Activated CD8-positive, alpha-beta memory T cell treated with anti-CD3 and anti-CD28 coated beads, Interleukin-2, amount 10 ng/mL, durations not matched to agents 7 days and 5 days (primary cell): ENCODE measurements at regions of chr7 and their contacts with region 1.

Region 1: GRCh38 chr7:37916673-37917660 is at the start of gene SFRP4:
- DNase-seq: no peak
- ATAC-seq: peak; percentile 31
- H3K4me3 Mint-ChIP-seq: peak within 1 kb of the TSS; percentile 37
- H3K27ac Mint-ChIP-seq: no peak within 1 kb of the TSS
- H3K4me1 Mint-ChIP-seq: peaks cover 21% of the 10 kb centered on the region
- H3K27me3 Mint-ChIP-seq: peaks cover 81% of the 10 kb centered on the region
- total RNA-seq, gene SFRP4: not detected

Region 2: DNA sequence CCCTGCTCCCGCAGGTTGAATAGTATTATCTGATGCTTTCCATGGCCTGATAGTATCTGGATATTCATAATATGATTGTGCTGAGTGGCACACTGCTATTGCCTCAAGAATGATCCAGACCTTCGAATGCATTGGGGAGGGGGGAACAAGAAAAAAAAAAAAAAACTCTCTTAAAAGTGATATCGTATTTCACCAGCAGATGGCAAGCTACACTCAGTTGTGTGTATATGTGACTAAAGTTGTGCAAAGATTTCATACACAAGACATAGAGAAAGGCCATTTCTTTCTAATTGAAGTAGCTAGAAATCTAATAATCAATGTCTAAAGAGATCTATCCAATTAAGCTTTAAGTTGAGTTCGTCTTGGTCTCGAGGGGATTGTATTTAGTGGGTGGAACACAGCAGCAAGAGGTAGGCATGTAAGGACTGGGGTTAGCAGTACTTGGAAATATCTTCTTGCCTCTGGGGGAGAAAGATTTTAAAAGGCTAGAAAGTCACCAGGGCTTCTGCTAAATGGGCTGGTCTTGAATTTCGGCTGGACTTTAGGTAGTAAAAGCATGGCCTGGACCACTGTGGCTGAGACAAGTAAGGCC is 15.6 kb before region 1 on chr7:
- CTCF ChIA-PET with region 1: interaction called, 10 read pairs
- DNase-seq: no peak
- ATAC-seq: no peak
- H3K4me3 Mint-ChIP-seq: no peak overlapping the region
- H3K27ac Mint-ChIP-seq: no peak overlapping the region
- H3K4me1 Mint-ChIP-seq: no peaks in the 10 kb centered on the region
- H3K27me3 Mint-ChIP-seq: peaks cover 9% of the 10 kb centered on the region

Region 3: DNA sequence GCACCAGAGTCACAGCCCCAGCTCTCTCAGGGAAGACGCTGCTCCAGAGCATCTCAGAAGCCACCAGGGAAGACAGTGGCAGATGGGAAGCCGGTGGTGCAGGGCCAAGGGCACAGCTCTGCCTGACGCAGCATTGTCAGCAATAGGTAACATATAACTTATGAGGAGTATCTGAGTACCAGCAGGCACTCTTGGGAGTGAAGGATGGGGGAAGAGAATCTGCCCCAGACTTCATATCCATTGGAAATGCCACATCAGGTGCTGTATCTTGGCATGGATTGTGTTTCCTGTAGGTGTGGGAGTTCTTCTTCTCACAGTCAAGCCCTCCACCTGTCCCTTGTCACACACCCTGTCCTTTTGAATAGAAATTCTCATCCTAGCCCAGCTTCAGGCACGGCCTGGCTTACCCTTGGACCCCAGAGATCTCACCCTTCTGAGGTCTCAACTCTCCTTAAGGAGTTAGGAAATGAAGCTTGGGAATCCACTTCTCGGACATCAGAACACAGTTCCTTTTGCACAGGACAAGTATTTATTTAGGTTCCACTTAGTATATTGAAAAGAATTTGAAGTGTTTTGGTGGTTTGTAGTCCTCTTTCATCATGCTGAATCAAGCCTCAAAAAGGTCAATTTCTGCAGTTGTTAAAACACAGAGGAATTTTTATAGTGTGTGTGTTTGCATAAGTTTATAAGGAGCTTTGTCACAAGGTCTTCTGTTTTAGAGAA is 13.4 kb after region 1 on chr7:
- CTCF ChIA-PET with region 1: no interaction called
- DNase-seq: no peak
- ATAC-seq: no peak
- H3K4me3 Mint-ChIP-seq: no peak overlapping the region
- H3K27ac Mint-ChIP-seq: no peak overlapping the region
- H3K4me1 Mint-ChIP-seq: no peaks in the 10 kb centered on the region
- H3K27me3 Mint-ChIP-seq: peaks cover 3% of the 10 kb centered on the region